ENCODE measurements at regions of chr20 and their contacts with region 1.

Region 1: GRCh38 chr20:44115762-44116644 is 71.0 kb downstream of the JPH2 start:
- DNase-seq: no peak
- ATAC-seq: no peak
- H3K4me3 ChIP-seq: no peak overlapping the region
- H3K4me1 ChIP-seq: no peaks in the 10 kb centered on the region
- CTCF ChIP-seq: no peak

Region 2: DNA sequence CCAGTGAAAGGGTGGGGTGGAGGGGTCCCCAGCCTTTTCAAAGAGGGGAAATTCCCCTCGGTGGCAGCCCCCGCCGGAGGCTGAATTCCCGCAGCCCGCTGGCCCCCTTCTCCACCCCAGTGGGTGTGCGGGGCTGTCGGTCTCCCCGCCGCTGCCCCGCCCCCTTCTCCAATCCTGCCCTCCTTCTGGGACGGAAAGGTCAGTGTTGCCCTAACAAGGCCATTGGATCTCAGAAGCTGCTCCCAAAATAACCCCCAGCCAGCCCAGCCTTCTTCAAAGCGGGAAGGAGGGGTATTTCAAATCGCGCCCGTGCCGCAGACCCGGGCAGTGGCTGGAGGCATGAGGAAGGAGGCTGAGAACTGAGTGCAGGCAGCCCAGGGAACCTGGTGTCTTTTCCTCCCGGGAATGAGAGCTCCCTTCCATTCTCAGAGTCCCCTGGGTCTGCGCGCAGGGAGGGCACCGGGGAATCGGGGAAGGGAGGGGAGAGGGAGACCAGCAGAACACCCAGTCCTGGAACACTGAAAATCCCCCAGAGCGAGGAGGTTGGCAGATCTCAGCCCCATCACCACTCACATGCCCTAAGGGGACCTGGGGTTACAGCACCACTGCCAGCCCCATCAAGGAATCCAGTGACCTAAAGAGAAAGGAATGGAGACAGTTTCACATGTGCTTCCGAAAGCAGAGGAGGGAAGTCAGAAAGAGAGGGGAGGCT is 71.2 kb after region 1 on chr20 and contains the start of gene JPH2:
- intact Hi-C with region 1: loop called (anchors 2 to 5 kb)
- DNase-seq: peak in 2 of 3 donors; percentile 47 to 61
- ATAC-seq: peak; percentile 65
- H3K4me3 ChIP-seq: no peak within 1 kb of the TSS
- H3K4me1 ChIP-seq: peaks cover 11% of the 10 kb centered on the region
- CTCF ChIP-seq: no peak
- total RNA-seq, gene JPH2: 2.3 to 87.3 (median 8.3) TPM

Region 3: GRCh38 chr20:44193801-44194200 is 77.8 kb after region 1 on chr20:
- intact Hi-C with region 1: loop called (anchors 2 to 5 kb)
- DNase-seq: no peak
- ATAC-seq: no peak
- H3K4me3 ChIP-seq: no peak overlapping the region
- H3K4me1 ChIP-seq: no peaks in the 10 kb centered on the region
- CTCF ChIP-seq: no peak

Measured in mucosa of descending colon (tissue), 3 donors.